HepG2 (cell line): ENCODE measurements at regions of chr14 and their contacts with region 1.

Region 1: DNA sequence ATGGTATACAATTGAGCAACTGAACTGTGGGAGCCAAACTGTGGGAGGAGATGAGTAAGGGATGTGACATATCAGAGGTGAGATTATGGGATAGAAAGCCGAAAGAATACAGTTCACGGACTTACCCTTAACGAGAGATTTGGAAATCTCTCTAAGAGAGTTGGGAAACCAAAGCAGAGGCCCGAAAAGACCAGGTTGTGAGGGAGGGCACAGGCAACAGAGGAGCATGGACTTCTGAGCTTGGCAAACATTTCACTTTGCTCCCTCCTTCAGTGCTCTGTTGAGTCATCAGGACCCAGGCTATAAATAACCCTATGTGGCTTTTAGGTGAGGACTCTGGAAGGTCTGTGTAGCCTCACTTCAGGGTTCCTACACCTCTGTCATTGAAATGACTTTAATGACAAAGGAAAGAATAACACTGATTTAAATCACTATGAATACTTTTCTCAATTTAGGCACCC is 120.6 kb downstream of the TGFB3 start:
- DNase-seq: peak; percentile 80
- ATAC-seq: peak; percentile 98
- H3K4me3 ChIP-seq: no peak overlapping the region; a peak in 1 of 6 replicates
- H3K27ac ChIP-seq: peak overlapping the region; percentile 31
- H3K4me1 ChIP-seq: peaks cover 31% of the 10 kb centered on the region
- H3K27me3 ChIP-seq: no peaks in the 10 kb centered on the region
- CTCF ChIP-seq: no peak
- EP300 ChIP-seq: peak in 1 of 2 experiments; percentile 35; a peak in 1 of 4 replicates
- POLR2A ChIP-seq: no peak
- RAD21 ChIP-seq: no peak

Region 2: DNA sequence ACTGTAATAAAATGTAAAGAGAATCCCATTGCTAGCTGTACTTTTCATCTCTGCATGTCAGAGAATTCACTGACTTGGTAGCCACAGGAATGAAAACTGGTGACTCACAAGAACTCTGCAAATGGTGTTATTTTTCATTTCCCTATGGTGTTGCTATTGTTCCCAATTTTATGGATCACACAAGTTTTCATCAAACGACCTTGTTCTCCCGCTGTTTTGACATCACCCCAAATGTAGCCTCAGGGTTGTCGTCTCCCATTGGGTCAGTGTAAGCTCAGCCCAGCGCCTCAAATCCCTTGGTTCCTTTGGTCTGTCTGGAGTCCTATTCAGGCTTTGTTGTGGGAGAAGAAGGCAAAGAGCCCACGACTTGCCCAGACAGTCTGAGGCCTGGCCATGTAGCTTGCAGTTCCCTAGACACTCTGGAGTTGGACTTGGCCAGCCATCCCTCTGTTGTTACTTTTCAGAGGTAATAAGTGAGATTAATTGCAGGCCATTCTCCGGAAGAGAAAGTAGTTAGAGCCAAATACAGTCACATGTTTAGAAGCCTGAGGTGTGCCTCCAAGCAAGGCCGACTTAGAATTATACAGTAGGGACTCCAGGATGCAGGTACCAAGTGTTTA is 38.6 kb before region 1 on chr14:
- CTCF ChIA-PET with region 1: no interaction called
- POLR2A ChIA-PET with region 1: no interaction called
- in situ Hi-C with region 1: no loop called
- intact Hi-C with region 1: loop called (anchors 5 kb)
- DNase-seq: no peak
- ATAC-seq: no peak
- H3K4me3 ChIP-seq: no peak overlapping the region
- H3K27ac ChIP-seq: no peak overlapping the region
- H3K4me1 ChIP-seq: peaks cover 39% of the 10 kb centered on the region
- H3K27me3 ChIP-seq: no peaks in the 10 kb centered on the region
- CTCF ChIP-seq: no peak
- EP300 ChIP-seq: no peak
- POLR2A ChIP-seq: no peak
- RAD21 ChIP-seq: no peak